AG04449 (cell line): ENCODE measurements at regions of chr17 and their contacts with region 1.

Region 1: GRCh38 chr17:47621293-47622178 is 28.2 kb upstream of the KPNB1 start:
- DNase-seq: peak; percentile 61
- H3K4me3 ChIP-seq: peak overlapping the region; percentile 6; the same call in 1 of the 2 replicates
- CTCF ChIP-seq: no peak

Region 2: GRCh38 chr17:47604598-47604927 is 17.0 kb before region 1 on chr17:
- CTCF ChIA-PET with region 1: interaction called, 60 read pairs
- POLR2A ChIA-PET with region 1: no interaction called
- DNase-seq: no peak
- H3K4me3 ChIP-seq: no peak overlapping the region
- CTCF ChIP-seq: no peak

Region 3: DNA sequence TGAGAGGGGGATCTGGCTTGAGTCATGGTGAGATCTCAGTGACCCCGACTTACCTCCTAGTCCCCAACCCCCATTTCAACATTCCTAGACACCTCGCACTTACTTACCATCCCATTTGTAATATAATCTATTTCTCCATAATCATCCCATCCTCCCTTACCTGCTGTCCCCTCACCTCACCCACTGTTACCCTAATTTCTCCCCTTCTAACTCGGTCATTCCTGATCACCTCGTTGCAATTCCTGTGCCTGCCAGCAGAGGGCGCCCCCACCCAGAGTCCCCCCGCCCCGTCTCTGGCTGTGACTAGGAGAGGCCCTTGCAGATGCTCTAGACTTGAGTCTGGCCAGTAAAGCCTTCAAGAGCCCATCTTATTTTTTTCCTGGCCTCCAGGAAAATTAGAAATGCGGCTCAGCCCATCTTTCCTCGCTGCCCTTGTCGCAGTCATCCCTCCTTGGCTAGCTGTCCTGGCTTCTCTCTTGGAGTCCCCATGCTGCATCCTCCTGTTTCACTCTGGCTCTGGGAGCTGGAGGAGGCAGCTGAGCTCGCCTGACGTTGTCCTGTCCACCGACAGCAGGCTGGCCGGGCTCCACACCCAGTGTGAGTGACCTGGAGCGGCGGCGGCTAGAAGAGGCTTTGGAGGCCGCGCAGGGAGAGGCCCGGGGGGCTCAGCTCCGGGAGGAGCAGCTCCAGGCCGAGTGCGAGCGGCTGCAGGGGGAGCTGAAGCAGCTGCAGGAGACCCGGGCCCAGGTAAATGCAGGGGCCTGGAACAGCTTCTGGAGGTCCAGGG is 77.4 kb after region 1 on chr17:
- CTCF ChIA-PET with region 1: no interaction called
- POLR2A ChIA-PET with region 1: no interaction called
- DNase-seq: no peak
- H3K4me3 ChIP-seq: no peak overlapping the region
- CTCF ChIP-seq: peak; percentile 80